Heart right ventricle (tissue), 16 donors: ENCODE measurements at regions of chr2 and their contacts with region 1.

Region 1: GRCh38 chr2:42828487-42829425 is 36.4 kb upstream of the HAAO start:
- DNase-seq: peak; percentile 75 to 77
- ATAC-seq: peak; percentile 87 to 97 (median 92)
- H3K4me3 ChIP-seq: peak overlapping the region in 1 of 10 donors; percentile 56
- H3K27ac ChIP-seq: peak overlapping the region in 7 of 10 donors; percentile 8 to 68 (median 57)
- H3K4me1 ChIP-seq: peaks cover 0 to 33% (median 27%) of the 10 kb centered on the region in 9 donors
- H3K27me3 ChIP-seq: no peaks in the 10 kb centered on the region
- CTCF ChIP-seq: peak; percentile 86 to 96 (median 94)

Region 2: DNA sequence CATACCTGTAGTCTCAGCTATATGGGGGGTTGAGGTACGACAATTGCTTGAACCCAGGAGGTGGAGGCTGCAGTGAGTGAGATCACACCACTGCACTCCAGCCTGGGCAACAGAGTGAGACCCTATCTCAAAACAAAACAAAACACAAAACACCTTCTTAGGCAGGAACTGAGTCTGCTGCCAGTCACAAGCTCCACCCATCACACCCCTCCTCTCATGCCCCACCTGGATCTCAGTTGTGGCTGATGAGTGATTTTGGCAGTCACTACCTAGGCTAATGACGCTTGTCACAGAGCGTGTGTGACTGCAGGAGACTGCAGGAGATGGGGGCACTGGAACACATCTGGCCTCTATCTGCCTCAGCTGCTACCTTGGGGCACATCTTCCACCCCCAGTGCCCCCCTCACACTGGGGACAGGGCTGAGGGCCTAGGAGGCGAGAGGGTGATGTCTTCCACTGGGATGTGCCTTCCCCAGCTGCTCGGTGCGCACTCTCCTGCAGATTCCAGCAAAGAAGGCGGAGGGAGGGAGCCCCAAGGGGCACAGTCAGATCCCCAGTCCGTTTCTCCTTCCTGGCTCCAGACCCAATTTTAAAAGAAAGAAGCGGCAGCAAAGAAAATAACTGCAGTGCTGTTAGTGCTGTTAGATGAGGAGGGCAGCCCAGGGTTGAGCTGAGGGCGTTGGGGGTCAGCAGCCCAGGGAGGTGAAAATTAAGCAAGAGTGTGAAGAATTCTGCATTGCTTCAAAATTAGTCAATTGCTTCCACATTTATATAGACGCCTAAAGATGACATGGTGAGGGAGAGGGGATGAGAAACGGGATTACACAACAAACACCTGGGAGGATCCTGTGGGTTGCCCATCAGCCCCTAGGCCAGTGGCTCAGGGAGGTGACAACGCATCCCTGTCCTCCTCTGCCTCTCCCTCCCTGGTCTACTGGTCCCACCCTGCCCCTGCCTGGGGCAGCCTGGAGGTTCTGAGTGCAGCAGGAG is 107.2 kb after region 1 on chr2:
- intact Hi-C with region 1: loop called in 1 of 10 experiments (anchors 5 kb)
- DNase-seq: no peak
- ATAC-seq: peak in 2 of 8 donors; percentile 13 to 26
- H3K4me3 ChIP-seq: no peak overlapping the region
- H3K27ac ChIP-seq: peak overlapping the region in 6 of 10 donors; percentile 9 to 69 (median 44)
- H3K4me1 ChIP-seq: peaks cover 14 to 78% (median 57%) of the 10 kb centered on the region in 9 donors
- H3K27me3 ChIP-seq: no peaks in the 10 kb centered on the region
- CTCF ChIP-seq: no peak

Region 3: DNA sequence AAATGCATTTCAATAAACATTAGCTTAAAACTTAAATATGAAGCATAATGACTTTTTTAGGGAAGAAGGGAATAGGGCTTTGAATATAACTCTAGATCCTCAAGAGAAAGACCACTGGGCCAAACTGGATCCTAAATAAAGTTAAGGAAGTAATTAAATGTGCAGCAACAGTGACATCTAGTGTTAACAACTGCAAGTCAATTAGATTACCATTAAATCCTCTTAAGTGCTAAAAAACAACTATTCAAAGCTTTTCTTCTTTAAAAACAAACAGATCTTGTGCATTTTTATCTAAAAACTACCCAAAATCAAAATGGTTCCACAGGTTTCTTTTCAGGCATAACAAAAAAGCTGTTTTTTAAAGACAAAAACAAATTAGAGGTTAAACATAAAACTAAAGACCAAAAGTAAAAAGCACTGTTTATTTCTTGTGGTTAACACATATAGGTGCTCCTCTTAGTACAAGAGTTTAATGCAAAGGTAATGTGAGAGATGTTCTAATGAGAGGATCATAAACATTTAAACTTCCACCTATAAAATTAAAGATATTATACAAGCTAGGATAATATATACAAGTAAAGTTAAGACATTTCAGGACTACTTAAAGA is 655.7 kb after region 1 on chr2:
- intact Hi-C with region 1: loop called in 9 of 10 experiments (anchors 1 to 5 kb)
- DNase-seq: peak in 1 of 2 donors; percentile 20
- ATAC-seq: peak in 6 of 8 donors; percentile 60 to 68 (median 64)
- H3K4me3 ChIP-seq: no peak overlapping the region
- H3K27ac ChIP-seq: peak overlapping the region in 5 of 10 donors; percentile 13 to 69 (median 65)
- H3K4me1 ChIP-seq: peaks cover 8 to 48% (median 29%) of the 10 kb centered on the region in 9 donors
- H3K27me3 ChIP-seq: no peaks in the 10 kb centered on the region
- CTCF ChIP-seq: peak; percentile 27 to 83 (median 71)

Region 4: GRCh38 chr2:43537137-43537536 is 708.4 kb after region 1 on chr2:
- intact Hi-C with region 1: loop called in 5 of 10 experiments (anchors 1 to 5 kb)
- DNase-seq: no peak
- ATAC-seq: no peak
- H3K4me3 ChIP-seq: no peak overlapping the region
- H3K27ac ChIP-seq: peak overlapping the region in 1 of 10 donors; percentile 17
- H3K4me1 ChIP-seq: peaks cover 0 to 50% (median 0%) of the 10 kb centered on the region in 9 donors
- H3K27me3 ChIP-seq: no peaks in the 10 kb centered on the region
- CTCF ChIP-seq: no peak

Region 5: GRCh38 chr2:43542285-43542937 is 713.7 kb after region 1 on chr2:
- intact Hi-C with region 1: loop called in 5 of 10 experiments (anchors 1 to 5 kb)
- DNase-seq: no peak
- ATAC-seq: peak in 3 of 8 donors; percentile 28 to 53 (median 46)
- H3K4me3 ChIP-seq: no peak overlapping the region
- H3K27ac ChIP-seq: no peak overlapping the region
- H3K4me1 ChIP-seq: peaks cover 0 to 42% (median 0%) of the 10 kb centered on the region in 9 donors
- H3K27me3 ChIP-seq: no peaks in the 10 kb centered on the region
- CTCF ChIP-seq: peak in 8 of 9 donors; percentile 52 to 80 (median 70)

Region 6: DNA sequence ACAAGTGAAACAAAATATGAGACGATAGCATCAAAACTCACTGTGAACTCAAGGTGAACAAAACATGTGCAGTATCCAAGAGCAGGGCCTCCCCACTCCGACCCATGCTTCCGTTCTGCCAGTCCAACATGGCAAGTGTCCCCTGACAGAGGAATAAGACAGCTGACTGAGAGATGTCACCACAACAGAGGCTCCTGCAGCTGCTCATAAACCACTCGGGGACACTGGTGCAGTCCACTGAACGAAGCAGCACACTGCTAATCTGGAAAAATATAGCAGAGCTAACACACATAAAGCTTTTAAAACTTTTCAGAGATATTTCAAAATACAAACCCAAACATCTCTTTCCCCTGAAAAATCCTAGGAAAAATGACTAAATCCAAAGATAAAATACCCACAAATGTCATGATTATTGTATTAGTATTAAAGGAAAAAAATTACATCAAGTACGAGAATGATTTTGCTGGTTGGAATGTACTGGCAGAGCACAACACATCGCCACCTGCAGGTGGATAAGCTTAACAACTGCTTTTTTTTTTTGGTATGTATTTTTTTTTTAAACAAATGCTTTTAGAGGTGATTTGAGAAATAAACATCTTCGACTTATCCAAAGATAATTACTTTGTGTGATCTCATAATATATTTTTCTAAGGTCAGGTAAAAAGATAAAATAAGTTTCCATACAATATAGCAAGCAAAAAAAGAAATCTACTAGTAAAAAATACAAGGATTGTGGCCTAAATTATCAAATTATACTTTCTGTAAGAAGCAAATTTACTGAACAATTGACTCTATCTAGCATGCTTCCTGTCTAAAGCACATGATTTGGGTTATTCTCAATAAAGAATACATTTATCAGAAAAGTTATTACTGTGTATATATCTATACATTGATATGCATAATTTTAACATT is 748.5 kb after region 1 on chr2:
- intact Hi-C with region 1: loop called in 6 of 10 experiments (anchors 2 to 10 kb)
- DNase-seq: no peak
- ATAC-seq: peak in 5 of 8 donors; percentile 25 to 69 (median 51)
- H3K4me3 ChIP-seq: no peak overlapping the region
- H3K27ac ChIP-seq: peak overlapping the region in 5 of 10 donors; percentile 14 to 45 (median 37)
- H3K4me1 ChIP-seq: peaks cover 0 to 5% (median 0%) of the 10 kb centered on the region in 9 donors
- H3K27me3 ChIP-seq: no peaks in the 10 kb centered on the region
- CTCF ChIP-seq: peak; percentile 54 to 90 (median 78)

Region 7: GRCh38 chr2:43611987-43612894 is 783.5 kb after region 1 on chr2:
- intact Hi-C with region 1: loop called in 3 of 10 experiments (anchors 1 to 10 kb)
- DNase-seq: peak; percentile 33 to 72
- ATAC-seq: peak; percentile 81 to 96 (median 90)
- H3K4me3 ChIP-seq: no peak overlapping the region
- H3K27ac ChIP-seq: no peak overlapping the region
- H3K4me1 ChIP-seq: no peaks in the 10 kb centered on the region
- H3K27me3 ChIP-seq: peaks cover 0 to 4% (median 0%) of the 10 kb centered on the region in 7 donors
- CTCF ChIP-seq: peak; percentile 60 to 86 (median 80)